Dorsolateral prefrontal cortex (tissue), 120 donors: ENCODE measurements at regions of chr5 and their contacts with region 1.

Region 1: DNA sequence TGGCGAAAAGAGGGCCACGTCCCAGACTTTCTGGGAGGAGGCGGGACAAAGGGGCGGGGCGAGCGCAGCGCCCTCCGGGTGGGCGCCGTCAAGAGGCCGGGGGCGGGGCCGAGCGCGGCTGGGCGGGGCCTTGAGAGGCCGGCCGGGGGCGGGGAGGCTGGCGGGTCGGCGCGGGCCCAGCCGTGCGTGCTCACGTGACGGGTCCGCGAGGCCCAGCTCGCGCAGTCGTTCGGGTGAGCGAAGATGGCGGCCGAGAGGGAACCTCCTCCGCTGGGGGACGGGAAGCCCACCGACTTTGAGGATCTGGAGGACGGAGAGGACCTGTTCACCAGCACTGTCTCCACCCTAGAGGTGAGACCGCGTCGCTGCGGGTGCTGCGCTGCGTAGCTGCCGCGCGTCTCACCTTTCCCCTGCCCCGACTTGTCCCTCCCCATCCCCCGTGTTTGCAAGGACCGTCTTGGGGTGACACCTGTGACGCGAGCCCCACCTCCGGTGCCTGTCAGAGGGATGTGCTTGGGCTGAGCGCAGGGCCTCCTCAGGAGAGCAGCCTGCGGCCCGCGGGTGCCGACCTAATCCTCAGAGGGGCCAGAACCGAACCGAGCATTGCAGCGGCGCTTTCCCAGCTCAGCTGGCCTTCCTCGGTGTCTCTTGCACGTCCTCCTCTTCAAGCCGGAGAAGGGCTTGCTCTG is at the start of gene SNX2:
- DNase-seq: peak; percentile 87 to 95 (median 90)
- H3K4me3 ChIP-seq: peak within 1 kb of the TSS; percentile 65 to 98 (median 92)
- H3K27ac ChIP-seq: peak within 1 kb of the TSS; percentile 19 to 94 (median 83)
- H3K27me3 ChIP-seq: no peaks in the 10 kb centered on the region
- CTCF ChIP-seq: peak in 29 of 56 donors; percentile 5 to 55 (median 26)
- total RNA-seq, gene SNX2: 33.1 to 80.2 (median 54.6) TPM

Region 2: DNA sequence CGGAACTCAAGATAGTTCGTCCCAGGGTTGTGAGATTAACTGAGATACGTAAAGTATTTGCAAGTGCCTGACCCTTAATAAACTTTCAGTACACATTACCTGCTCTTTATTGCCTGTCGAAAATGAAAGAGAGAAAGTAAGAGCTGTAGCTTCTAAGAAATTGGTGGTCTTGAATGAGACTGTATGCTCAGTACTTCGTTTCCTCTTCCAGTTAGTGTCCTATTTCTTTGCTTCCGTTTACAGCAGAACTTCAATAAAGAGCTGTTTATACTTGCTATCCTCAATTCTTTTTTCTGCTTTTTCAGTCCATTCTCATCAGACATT is 812.7 kb before region 1 on chr5:
- intact Hi-C with region 1: loop called in 1 of 2 experiments (anchors 5 kb)
- DNase-seq: no peak
- H3K4me3 ChIP-seq: peak overlapping the region; percentile 60 to 100 (median 91)
- H3K27ac ChIP-seq: peak overlapping the region in 19 of 59 donors; percentile 5 to 85 (median 54)
- H3K27me3 ChIP-seq: peaks cover 0 to 10% (median 0%) of the 10 kb centered on the region in 45 donors
- CTCF ChIP-seq: no peak

Region 3: DNA sequence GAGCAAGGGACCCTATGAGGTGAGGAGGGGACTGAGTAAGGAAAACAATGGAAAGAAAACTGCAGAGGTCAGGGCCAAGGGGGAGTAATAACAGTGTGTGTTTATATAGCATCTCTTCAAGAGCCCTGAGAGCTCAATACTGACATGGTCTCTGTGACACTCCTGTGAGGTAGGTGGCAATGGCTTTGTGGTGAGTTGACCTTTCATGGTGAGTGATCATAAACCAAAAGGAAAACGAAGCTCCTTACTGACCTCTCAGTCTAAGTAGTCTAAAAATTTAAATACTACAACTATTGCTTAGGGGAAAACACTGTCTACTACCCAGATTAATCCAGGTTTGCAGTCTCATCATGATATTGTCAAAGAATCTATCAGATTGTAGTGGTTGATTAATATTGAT is 332.1 kb before region 1 on chr5:
- intact Hi-C with region 1: no loop called
- DNase-seq: no peak
- H3K4me3 ChIP-seq: no peak overlapping the region
- H3K27ac ChIP-seq: no peak overlapping the region
- H3K27me3 ChIP-seq: peaks cover 0 to 2% (median 0%) of the 10 kb centered on the region in 45 donors
- CTCF ChIP-seq: no peak

Region 4: DNA sequence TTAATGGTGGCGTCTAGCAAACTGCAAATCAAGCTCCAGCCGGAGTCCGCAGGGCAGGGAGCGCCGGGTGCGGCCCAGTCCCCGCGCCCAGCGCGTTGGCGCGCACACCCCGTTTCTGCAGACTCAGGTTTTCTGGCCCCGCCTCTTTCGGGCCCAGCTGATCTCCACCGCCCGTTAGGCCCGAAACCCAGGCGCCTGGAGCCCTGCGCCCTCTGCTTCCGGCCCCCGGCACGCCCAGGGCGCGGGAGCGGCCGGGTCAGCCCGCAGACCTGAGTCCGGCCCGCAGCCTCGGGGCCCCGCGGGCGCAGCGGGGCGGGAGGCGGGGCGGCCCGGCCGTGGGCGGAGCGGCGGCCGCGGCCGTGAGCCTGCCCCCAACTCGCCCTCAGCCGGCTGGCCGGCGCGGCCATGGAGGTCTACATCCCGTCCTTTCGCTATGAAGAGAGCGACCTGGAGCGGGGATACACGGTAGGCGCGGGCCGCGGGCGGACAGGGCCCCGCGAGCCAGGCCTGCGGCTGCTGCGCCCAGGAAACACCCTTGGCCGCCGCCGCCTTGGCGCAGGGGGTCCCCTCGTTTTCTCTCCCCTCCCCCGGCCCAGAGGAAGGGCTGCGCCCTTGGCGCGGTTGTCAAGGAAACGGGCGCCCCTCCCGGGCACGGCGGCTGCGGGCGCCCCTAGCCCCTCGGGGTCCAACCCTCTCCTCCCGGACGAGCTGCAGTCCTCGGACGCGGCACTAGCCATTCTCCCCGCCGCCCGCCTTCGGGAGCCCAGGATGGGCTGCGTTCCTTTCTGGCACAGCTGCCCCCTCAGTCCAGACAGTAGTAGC is 70.4 kb after region 1 on chr5 and contains the start of gene SNX24:
- intact Hi-C with region 1: loop called (anchors 5 to 10 kb)
- DNase-seq: peak; percentile 53 to 81 (median 68)
- H3K4me3 ChIP-seq: peak within 1 kb of the TSS; percentile 61 to 93 (median 85)
- H3K27ac ChIP-seq: peak within 1 kb of the TSS in 57 of 59 donors; percentile 20 to 94 (median 83)
- H3K27me3 ChIP-seq: no peaks in the 10 kb centered on the region
- CTCF ChIP-seq: peak in 14 of 56 donors; percentile 2 to 28 (median 14)
- total RNA-seq, gene SNX24: 16.5 to 36.8 (median 24.1) TPM

Region 5: GRCh38 chr5:122858454-122858853 is 83.4 kb after region 1 on chr5:
- intact Hi-C with region 1: no loop called
- DNase-seq: no peak
- H3K4me3 ChIP-seq: no peak overlapping the region
- H3K27ac ChIP-seq: no peak overlapping the region
- H3K27me3 ChIP-seq: no peaks in the 10 kb centered on the region
- CTCF ChIP-seq: no peak

Region 6: DNA sequence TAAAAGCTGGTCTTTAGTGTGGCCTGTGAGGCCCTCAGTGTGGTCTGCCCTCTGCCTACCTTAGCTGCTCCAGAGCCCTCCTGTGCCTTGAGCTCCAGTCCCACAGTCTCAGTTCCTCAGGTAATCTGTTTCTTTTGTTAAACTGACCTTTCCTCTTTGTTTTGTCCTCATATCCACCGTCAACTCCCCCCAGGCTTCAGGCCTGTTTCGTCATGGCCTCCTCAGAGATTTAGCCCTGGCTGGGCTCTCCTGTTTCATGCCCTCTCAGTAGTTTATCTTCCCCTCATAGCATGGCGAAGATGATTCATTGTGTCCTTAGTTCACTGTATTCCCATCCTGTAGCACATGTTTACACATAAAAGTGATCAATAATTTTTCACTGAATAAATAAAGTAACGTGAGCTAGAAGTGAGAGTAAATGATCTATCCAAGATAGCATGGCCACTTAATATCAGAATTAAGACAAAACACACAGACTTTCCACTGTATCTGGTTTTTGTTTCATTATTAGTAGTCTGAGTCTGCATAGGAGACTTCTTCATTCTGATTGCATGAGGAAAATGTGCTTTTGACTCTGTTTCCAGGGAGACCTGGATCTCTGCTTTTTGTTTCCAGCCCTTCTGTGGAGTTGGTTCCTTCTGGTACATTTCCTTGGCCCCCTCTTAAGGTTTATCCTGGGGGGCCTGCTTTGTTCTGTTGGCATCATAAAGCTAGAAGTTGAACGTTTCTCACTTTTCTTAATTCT is 140.9 kb after region 1 on chr5:
- intact Hi-C with region 1: no loop called
- DNase-seq: no peak
- H3K4me3 ChIP-seq: no peak overlapping the region
- H3K27ac ChIP-seq: no peak overlapping the region
- H3K27me3 ChIP-seq: no peaks in the 10 kb centered on the region
- CTCF ChIP-seq: no peak